Endothelial cell of umbilical vein (primary cell): ENCODE measurements at regions of chr1 and their contacts with region 1.

Region 1: GRCh38 chr1:186212544-186213226 is 162.4 kb downstream of the TPR start:
- DNase-seq: peak; percentile 88
- H3K4me3 ChIP-seq: no peak overlapping the region
- H3K27ac ChIP-seq: no peak overlapping the region
- H3K4me1 ChIP-seq: peaks cover 4% of the 10 kb centered on the region
- H3K27me3 ChIP-seq: no peaks in the 10 kb centered on the region
- CTCF ChIP-seq: peak; percentile 73 to 77
- POLR2A ChIP-seq: no peak

Region 2: GRCh38 chr1:185652348-185652747 is 560.3 kb before region 1 on chr1:
- CTCF ChIA-PET with region 1: no interaction called
- POLR2A ChIA-PET with region 1: no interaction called
- dilution Hi-C with region 1: no loop called
- intact Hi-C with region 1: loop called (anchors 1 kb)
- DNase-seq: no peak
- H3K4me3 ChIP-seq: no peak overlapping the region
- H3K27ac ChIP-seq: no peak overlapping the region
- H3K4me1 ChIP-seq: peaks cover 2% of the 10 kb centered on the region
- H3K27me3 ChIP-seq: no peaks in the 10 kb centered on the region
- CTCF ChIP-seq: peak; percentile 12 to 17
- POLR2A ChIP-seq: no peak

Region 3: GRCh38 chr1:185733818-185734771 is 478.6 kb before region 1 on chr1 and contains the start of gene HMCN1:
- CTCF ChIA-PET with region 1: interaction called, 4 read pairs
- POLR2A ChIA-PET with region 1: no interaction called
- dilution Hi-C with region 1: no loop called
- intact Hi-C with region 1: loop called (anchors 1 kb)
- DNase-seq: peak; percentile 85
- H3K4me3 ChIP-seq: peak within 1 kb of the TSS; percentile 52 to 80 (median 74)
- H3K27ac ChIP-seq: peak within 1 kb of the TSS; percentile 50
- H3K4me1 ChIP-seq: peaks cover 19% of the 10 kb centered on the region
- H3K27me3 ChIP-seq: no peaks in the 10 kb centered on the region
- CTCF ChIP-seq: peak; percentile 42 to 51
- POLR2A ChIP-seq: no peak
- total RNA-seq, gene HMCN1: 5.6 and 10.3 TPM in 2 replicates

Region 4: DNA sequence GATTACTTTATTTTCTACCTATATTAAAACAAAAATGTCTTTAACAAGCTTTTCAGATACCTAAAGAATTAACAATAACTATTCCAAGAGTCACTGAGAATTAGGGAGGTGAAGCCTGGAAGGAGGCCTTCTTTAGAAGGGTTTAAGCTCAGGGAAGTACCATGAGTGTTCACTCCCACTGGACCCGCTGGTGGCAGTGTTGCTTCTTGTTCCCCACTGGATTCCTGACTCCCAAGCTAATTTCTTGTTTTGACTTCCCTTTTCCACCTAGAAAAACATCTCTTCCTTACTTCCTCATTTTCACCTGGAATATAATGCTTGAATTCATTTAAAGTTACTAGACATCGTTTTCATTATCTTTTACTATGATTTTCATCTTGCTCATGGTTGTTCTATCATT is 214.3 kb before region 1 on chr1:
- CTCF ChIA-PET with region 1: interaction called, 9 read pairs
- POLR2A ChIA-PET with region 1: no interaction called
- dilution Hi-C with region 1: no loop called
- intact Hi-C with region 1: loop called (anchors 1 kb)
- DNase-seq: no peak
- H3K4me3 ChIP-seq: no peak overlapping the region
- H3K27ac ChIP-seq: no peak overlapping the region
- H3K4me1 ChIP-seq: no peaks in the 10 kb centered on the region
- H3K27me3 ChIP-seq: no peaks in the 10 kb centered on the region
- CTCF ChIP-seq: no peak
- POLR2A ChIP-seq: no peak

Region 5: GRCh38 chr1:186155594-186155993 is 57.1 kb before region 1 on chr1:
- CTCF ChIA-PET with region 1: interaction called, 19 read pairs
- POLR2A ChIA-PET with region 1: no interaction called
- dilution Hi-C with region 1: no loop called
- intact Hi-C with region 1: loop called (anchors 1 kb)
- DNase-seq: peak; percentile 60
- H3K4me3 ChIP-seq: no peak overlapping the region
- H3K27ac ChIP-seq: no peak overlapping the region
- H3K4me1 ChIP-seq: no peaks in the 10 kb centered on the region
- H3K27me3 ChIP-seq: no peaks in the 10 kb centered on the region
- CTCF ChIP-seq: peak; percentile 41 to 45
- POLR2A ChIP-seq: no peak